Activated B cell treated with CpG ODN at 0.5 μM for 24 hours (primary cell): ENCODE measurements at regions of chr2 and their contacts with region 1.

Region 1: GRCh38 chr2:55519938-55520885 is 694 bp downstream of the CFAP36 start:
- DNase-seq: peak; percentile 17
- ATAC-seq: peak; percentile 10
- H3K4me3 Mint-ChIP-seq: peak overlapping the region; percentile 98
- H3K27ac Mint-ChIP-seq: peak overlapping the region; percentile 96
- H3K4me1 Mint-ChIP-seq: peaks cover 16% of the 10 kb centered on the region
- H3K27me3 Mint-ChIP-seq: no peaks in the 10 kb centered on the region
- CTCF ChIP-seq: no peak

Region 2: GRCh38 chr2:53654396-53654795 is 1865.8 kb before region 1 on chr2:
- CTCF ChIA-PET with region 1: no interaction called
- POLR2A ChIA-PET with region 1: no interaction called
- intact Hi-C with region 1: no loop called
- DNase-seq: no peak
- ATAC-seq: no peak
- H3K4me3 Mint-ChIP-seq: no peak overlapping the region
- H3K27ac Mint-ChIP-seq: no peak overlapping the region
- H3K4me1 Mint-ChIP-seq: no peaks in the 10 kb centered on the region
- H3K27me3 Mint-ChIP-seq: no peaks in the 10 kb centered on the region
- CTCF ChIP-seq: no peak

Region 3: DNA sequence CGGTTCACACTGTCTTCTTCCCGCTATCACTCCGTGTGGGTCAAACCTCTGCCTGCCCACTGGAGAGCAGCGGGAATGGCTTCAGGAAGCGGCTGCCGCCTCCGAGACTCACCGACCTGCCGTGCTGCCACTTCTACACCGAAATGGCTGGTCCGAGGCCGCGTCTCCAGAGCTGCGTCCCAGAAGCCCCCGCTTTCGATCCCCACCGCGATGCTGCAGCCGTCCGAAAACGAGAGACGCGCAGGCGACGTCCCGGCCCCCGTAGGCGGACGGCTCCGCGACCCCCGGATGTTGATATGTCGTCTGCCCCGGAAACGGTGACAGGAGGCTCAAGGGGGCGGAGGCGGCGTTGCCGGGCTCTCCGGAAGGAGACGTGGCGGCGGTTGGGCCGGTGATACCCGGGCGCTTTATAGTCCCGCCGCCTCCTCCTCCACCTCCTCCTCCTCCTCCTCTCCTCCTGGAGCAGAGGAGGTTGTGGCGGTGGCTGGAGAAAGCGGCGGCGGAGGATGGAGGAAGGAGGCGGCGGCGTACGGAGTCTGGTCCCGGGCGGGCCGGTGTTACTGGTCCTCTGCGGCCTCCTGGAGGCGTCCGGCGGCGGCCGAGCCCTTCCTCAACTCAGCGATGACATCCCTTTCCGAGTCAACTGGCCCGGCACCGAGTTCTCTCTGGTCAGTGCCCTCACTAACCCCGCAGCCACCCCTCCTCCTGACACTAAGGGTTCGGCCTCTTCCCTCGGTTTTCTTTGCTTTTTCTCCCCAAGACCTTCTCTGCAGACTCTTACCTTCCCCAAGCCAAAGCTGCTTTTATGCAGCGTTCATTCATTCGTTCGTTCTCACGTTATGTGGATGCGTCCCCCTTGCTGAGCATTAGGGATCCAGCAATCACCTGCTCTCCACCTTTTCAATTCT is 1733.3 kb before region 1 on chr2 and contains the starts of genes ASB3 and ERLEC1:
- CTCF ChIA-PET with region 1: no interaction called
- POLR2A ChIA-PET with region 1: no interaction called
- intact Hi-C with region 1: loop called (anchors 5 kb)
- DNase-seq: peak; percentile 82
- ATAC-seq: peak; percentile 93
- H3K4me3 Mint-ChIP-seq: peak within 1 kb of the TSS; percentile 91
- H3K27ac Mint-ChIP-seq: peak within 1 kb of the TSS; percentile 94
- H3K4me1 Mint-ChIP-seq: peaks cover 50% of the 10 kb centered on the region
- H3K27me3 Mint-ChIP-seq: no peaks in the 10 kb centered on the region
- CTCF ChIP-seq: no peak
- total RNA-seq, gene ASB3: 16.3 and 22.8 TPM in 2 replicates
- total RNA-seq, gene ERLEC1: 16.8 and 18.2 TPM in 2 replicates

Region 4: GRCh38 chr2:55232084-55232862 is 287.9 kb before region 1 on chr2 and contains the starts of genes CLHC1 and RPS27A:
- CTCF ChIA-PET with region 1: no interaction called
- POLR2A ChIA-PET with region 1: interaction called, 12 read pairs
- intact Hi-C with region 1: loop called (anchors 2 kb)
- DNase-seq: peak; percentile 92
- ATAC-seq: peak; percentile 86
- H3K4me3 Mint-ChIP-seq: peak within 1 kb of the TSS; percentile 99
- H3K27ac Mint-ChIP-seq: peak within 1 kb of the TSS; percentile 98
- H3K4me1 Mint-ChIP-seq: peaks cover 58% of the 10 kb centered on the region
- H3K27me3 Mint-ChIP-seq: no peaks in the 10 kb centered on the region
- CTCF ChIP-seq: no peak
- total RNA-seq, gene CLHC1: 7.1 and 10.5 TPM in 2 replicates
- total RNA-seq, gene RPS27A: 1,833 and 2,316 TPM in 2 replicates

Region 5: DNA sequence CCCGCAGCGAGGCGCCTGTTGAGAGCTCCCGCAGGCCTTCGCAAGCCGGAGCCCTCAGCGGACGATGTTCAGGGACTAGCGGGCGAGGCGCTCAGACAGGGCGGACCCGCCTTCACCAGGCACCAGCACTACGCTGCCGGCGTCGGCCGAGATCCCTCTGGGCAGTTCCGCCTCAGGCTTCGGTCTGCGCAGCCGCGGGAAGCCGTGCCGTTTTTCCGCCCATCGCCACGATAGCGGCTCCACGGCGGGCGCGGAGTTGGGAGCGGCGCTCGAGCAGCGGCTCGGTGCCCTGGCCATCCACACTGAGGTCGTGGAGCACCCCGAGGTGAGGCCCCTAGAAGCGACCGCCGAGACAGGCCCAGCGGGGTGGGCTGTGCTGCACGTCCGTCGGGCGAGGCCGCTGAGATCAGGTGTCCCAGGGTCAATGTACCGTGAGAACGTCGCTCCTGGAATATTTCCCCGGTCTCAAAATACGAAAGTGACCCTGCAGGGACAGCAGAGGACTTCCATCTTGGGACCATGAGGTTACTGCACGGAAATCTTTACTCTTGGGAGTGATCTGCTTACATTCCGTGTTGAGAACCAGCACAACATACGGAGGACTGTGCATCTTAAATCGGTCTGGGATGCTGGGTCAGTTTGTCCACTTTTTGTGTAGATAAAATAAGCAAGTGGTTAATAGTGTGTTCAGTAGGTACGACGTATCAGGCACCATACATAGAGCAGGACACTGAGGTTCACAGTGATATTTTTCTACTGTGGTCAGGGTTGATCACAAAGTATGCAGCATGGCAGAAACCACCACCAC is 237.9 kb before region 1 on chr2:
- CTCF ChIA-PET with region 1: no interaction called
- POLR2A ChIA-PET with region 1: interaction called, 3 read pairs
- intact Hi-C with region 1: loop called (anchors 1 kb)
- DNase-seq: peak; percentile 83
- ATAC-seq: peak; percentile 99
- H3K4me3 Mint-ChIP-seq: peak overlapping the region; percentile 88
- H3K27ac Mint-ChIP-seq: peak overlapping the region; percentile 93
- H3K4me1 Mint-ChIP-seq: peaks cover 28% of the 10 kb centered on the region
- H3K27me3 Mint-ChIP-seq: no peaks in the 10 kb centered on the region
- CTCF ChIP-seq: no peak

Region 6: GRCh38 chr2:55693181-55694134 is 173.2 kb after region 1 on chr2 and contains the start of gene PNPT1:
- CTCF ChIA-PET with region 1: no interaction called
- POLR2A ChIA-PET with region 1: no interaction called
- intact Hi-C with region 1: loop called (anchors 1 kb)
- DNase-seq: peak; percentile 87
- ATAC-seq: peak; percentile 100
- H3K4me3 Mint-ChIP-seq: peak within 1 kb of the TSS; percentile 96
- H3K27ac Mint-ChIP-seq: peak within 1 kb of the TSS; percentile 79
- H3K4me1 Mint-ChIP-seq: peaks cover 30% of the 10 kb centered on the region
- H3K27me3 Mint-ChIP-seq: no peaks in the 10 kb centered on the region
- CTCF ChIP-seq: no peak
- total RNA-seq, gene PNPT1: 26.6 and 35.8 TPM in 2 replicates